PC-3 (cell line): ENCODE measurements at regions of chr2 and their contacts with region 1.

Region 1: GRCh38 chr2:218979846-218980734 is 4.9 kb downstream of the FEV start:
- DNase-seq: peak; percentile 89
- ATAC-seq: peak; percentile 93
- H3K4me3 ChIP-seq: peak overlapping the region; percentile 77
- H3K27ac ChIP-seq: no peak overlapping the region
- H3K4me1 ChIP-seq: no peaks in the 10 kb centered on the region
- H3K27me3 ChIP-seq: peaks cover 26% of the 10 kb centered on the region
- CTCF ChIP-seq: peak; percentile 98

Region 2: DNA sequence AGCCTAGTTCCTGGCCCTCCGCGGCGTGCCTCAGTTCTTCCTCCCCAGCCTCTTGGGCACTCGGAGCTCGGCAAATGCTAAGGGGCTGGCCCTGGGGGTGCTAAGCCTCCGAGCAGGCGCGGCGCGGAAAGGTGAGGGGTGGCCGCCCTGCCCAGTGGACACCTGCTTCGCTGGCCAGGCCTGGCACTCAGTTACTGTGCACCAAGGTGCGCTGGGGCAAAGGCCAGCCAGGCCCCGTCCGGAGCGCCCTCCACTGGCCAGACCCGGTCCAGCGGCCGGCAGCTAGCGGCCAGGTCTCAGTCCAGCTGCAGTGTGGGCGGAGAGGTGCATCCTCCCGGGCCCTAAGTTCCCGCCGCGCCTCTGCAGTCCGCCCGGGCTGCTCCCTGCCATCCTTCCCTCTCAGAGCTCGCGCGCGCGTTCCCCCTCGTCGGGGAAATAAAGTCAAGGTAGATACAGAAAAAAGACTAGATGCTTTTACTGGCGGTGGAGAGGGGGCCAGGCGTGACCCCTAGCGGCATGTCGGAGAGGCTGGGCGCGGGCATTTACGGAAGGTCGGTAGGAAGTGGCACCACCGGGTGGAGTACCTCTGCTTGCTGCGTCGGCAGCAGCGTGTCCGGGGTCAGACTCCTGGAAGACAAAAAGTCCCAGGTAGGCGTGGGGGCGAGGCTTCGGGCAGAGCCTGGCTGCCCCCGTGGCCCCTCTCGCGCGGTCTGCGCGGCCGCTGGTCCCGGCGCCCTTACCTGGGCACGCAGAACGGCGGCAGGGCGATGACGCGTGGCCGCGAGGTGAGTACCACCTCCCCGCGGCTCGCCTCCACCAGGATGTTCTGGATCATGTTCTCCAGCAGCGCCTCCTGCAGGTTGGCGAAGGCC is 22.5 kb after region 1 on chr2:
- CTCF ChIA-PET with region 1: interaction called, 19 read pairs
- POLR2A ChIA-PET with region 1: no interaction called
- intact Hi-C with region 1: no loop called
- DNase-seq: peak; percentile 74
- ATAC-seq: peak; percentile 61
- H3K4me3 ChIP-seq: peak overlapping the region; percentile 66
- H3K27ac ChIP-seq: no peak overlapping the region
- H3K4me1 ChIP-seq: peaks cover 23% of the 10 kb centered on the region
- H3K27me3 ChIP-seq: peaks cover 18% of the 10 kb centered on the region
- CTCF ChIP-seq: peak; percentile 64